GM18951 (cell line): ENCODE measurements at regions of chr14 and their contacts with region 1.

Region 1: DNA sequence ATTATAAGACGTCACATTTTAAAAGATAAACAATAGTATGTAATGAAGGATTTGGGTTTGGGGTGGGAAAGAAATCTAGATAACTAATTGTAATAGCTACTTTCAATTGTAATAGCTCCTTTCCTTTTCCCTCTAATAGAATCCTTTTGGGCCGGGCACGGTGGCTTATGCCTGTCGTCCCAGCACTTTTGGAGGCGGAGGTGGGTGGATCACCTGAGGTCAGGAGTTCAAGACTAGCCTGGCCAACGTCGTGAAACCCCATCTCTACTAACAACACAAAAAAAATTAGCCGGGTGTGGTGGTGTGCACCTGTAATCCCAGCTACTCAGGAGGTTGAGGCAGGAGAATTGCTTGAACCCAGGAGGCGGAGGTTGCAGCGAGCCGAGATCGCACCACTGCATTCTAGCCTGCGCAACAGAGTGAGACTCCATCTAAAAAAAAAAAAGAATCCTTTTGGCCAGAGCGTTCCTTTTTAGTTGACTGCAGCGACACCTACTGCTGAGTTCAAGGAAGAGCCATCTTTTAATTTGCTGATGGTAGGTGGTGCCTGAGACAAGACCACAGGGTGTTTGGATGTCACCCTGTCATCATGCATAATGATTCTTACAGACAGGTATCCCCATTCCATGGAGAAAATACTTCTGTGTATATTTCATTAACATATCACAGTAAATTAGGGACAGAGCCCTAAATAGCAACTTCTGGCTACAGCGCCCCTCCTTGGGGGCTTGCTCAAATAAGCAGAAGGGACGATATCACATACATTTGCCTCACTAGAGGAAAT is 79.5 kb downstream of the ARMH4 start:
- POLR2A ChIP-seq: no peak

Region 2: DNA sequence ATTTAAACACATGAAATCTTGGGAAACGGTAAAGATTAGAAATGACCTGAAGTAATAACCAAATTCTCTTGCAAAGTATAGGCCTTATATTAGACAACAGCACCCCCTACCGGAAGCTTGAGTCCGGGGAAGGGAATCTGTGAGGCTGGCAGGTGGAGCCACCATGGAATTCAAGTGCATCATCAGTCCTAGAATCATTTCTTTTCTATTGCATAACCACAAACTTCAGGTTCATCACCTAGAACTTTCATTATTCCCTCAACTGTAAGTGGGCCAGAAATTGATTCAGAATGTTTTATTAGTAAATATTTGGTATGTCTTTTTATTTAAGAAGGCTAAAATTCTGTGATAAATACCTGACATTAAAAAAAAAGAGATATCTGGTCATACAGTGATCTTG is 755.2 kb before region 1 on chr14:
- in situ Hi-C with region 1: loop called (anchors 25 kb)
- POLR2A ChIP-seq: no peak

Region 3: DNA sequence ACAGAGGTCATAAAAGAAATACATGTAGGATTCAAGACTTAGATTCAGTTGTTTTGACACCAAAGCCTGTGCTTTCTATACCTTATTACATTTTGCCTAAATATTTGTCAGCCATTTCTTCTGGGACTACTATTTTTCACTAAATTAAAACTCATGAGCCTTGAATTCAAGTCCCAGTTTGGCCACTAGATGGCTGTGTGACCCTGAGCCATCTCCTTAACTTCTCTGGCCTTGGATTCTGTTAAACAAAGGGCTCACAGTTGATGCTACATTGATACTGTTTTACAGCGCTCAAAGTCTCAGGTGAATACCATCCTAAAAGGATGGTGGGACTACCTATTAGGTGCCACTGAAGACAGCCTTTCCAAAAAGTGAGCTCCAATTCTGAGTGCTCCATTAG is 539.3 kb before region 1 on chr14:
- in situ Hi-C with region 1: loop called (anchors 25 kb)
- POLR2A ChIP-seq: no peak

Region 4: DNA sequence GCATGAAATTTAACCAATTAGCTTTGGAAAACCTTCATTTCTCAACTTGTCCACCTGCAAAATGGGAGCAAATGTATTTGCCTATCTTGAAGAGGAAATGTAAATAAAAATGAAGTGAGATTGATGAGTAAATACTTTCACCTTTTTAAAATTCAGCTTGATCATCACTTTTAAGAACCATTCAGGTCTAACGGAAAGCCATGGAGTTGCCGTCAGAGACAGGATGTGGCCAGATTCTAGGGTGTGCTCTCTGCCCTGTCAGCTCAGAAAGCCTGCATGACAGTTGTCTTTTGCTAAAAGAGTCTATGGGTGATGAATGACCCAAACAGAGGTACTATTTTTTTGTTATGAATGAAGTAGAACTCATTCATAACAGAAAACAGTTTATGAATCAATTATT is 102.3 kb before region 1 on chr14:
- in situ Hi-C with region 1: no loop called
- POLR2A ChIP-seq: no peak